Caco-2 (cell line): ENCODE measurements at regions of chr2 and their contacts with region 1.

Region 1: GRCh38 chr2:54233832-54234649 is 22.0 kb downstream of the TSPYL6 start:
- DNase-seq: peak; percentile 51 to 72
- H3K4me3 ChIP-seq: no peak overlapping the region
- H3K4me3 Mint-ChIP-seq: peak overlapping the region; percentile 53
- H3K27ac Mint-ChIP-seq: peak overlapping the region; percentile 80
- H3K4me1 ChIP-seq: peaks cover 31% of the 10 kb centered on the region
- H3K4me1 Mint-ChIP-seq: peaks cover 26% of the 10 kb centered on the region
- H3K27me3 ChIP-seq: no peaks in the 10 kb centered on the region
- H3K27me3 Mint-ChIP-seq: no peaks in the 10 kb centered on the region
- CTCF ChIP-seq: no peak

Region 2: GRCh38 chr2:54084600-54084999 is 149.4 kb before region 1 on chr2:
- CTCF ChIA-PET with region 1: no interaction called
- POLR2A ChIA-PET with region 1: no interaction called
- intact Hi-C with region 1: no loop called
- DNase-seq: no peak
- H3K4me3 ChIP-seq: no peak overlapping the region
- H3K4me3 Mint-ChIP-seq: no peak overlapping the region
- H3K27ac Mint-ChIP-seq: no peak overlapping the region
- H3K4me1 ChIP-seq: peaks cover 18% of the 10 kb centered on the region
- H3K4me1 Mint-ChIP-seq: peaks cover 13% of the 10 kb centered on the region
- H3K27me3 ChIP-seq: 0 out of 2 replicates have a peak, but pooled peaks cover 1% of the 10 kb centered on the region
- H3K27me3 Mint-ChIP-seq: peaks cover 2% of the 10 kb centered on the region
- CTCF ChIP-seq: peak; percentile 33 to 52

Region 3: DNA sequence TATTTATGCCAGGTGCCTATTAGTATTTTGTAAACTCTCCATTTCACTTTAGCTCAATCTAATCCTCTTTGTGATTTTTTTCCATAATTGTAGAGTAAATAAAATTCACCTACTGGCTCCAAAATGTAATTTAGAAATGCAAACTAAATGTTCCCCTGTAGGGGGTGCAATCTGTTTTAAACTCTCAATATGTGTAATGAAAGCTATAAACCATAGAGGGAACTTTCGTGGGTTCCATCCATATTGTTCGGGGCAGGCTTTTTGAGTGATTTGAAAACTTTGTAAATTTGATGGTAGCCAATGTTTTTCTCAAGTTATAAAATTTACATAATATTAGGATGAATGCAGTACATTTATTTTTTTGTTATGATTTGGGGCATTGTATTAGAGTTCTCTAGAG is 27.4 kb before region 1 on chr2:
- CTCF ChIA-PET with region 1: no interaction called
- POLR2A ChIA-PET with region 1: interaction called, 3 read pairs
- intact Hi-C with region 1: loop called (anchors 2 kb)
- DNase-seq: peak in 1 of 2 experiments; percentile 39
- H3K4me3 ChIP-seq: no peak overlapping the region
- H3K4me3 Mint-ChIP-seq: no peak overlapping the region
- H3K27ac Mint-ChIP-seq: no peak overlapping the region
- H3K4me1 ChIP-seq: 0 out of 2 replicates have a peak, but pooled peaks cover 5% of the 10 kb centered on the region
- H3K4me1 Mint-ChIP-seq: peaks cover 27% of the 10 kb centered on the region
- H3K27me3 ChIP-seq: no peaks in the 10 kb centered on the region
- H3K27me3 Mint-ChIP-seq: no peaks in the 10 kb centered on the region
- CTCF ChIP-seq: peak; percentile 43 to 50

Region 4: DNA sequence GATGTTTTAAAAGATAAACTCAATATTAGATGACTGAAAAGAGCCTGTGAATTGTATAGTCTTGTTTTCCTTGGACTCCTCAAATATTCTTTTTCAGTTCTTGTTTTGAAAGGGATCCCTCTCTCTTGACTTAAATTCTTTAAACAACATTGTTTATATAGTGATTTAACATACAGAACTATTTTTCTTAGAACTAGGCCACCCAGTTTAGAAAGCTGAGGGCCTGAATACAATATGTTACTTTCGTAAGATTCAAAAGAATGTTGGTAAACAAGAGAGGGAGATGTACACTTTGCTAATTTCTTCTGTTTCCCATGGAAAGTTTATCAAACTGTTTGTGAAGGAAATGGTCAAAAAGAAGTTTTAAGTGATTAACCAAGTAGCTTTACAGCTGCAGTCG is 27.5 kb after region 1 on chr2:
- CTCF ChIA-PET with region 1: no interaction called
- POLR2A ChIA-PET with region 1: no interaction called
- intact Hi-C with region 1: loop called (anchors 1 kb)
- DNase-seq: no peak
- H3K4me3 ChIP-seq: no peak overlapping the region
- H3K4me3 Mint-ChIP-seq: no peak overlapping the region
- H3K27ac Mint-ChIP-seq: no peak overlapping the region
- H3K4me1 ChIP-seq: peaks cover 16% of the 10 kb centered on the region
- H3K4me1 Mint-ChIP-seq: no peaks in the 10 kb centered on the region
- H3K27me3 ChIP-seq: no peaks in the 10 kb centered on the region
- H3K27me3 Mint-ChIP-seq: no peaks in the 10 kb centered on the region
- CTCF ChIP-seq: no peak

Region 5: GRCh38 chr2:54274781-54275242 is 40.8 kb after region 1 on chr2:
- CTCF ChIA-PET with region 1: interaction called, 3 read pairs
- POLR2A ChIA-PET with region 1: no interaction called
- intact Hi-C with region 1: loop called (anchors 5 kb)
- DNase-seq: no peak
- H3K4me3 ChIP-seq: no peak overlapping the region
- H3K4me3 Mint-ChIP-seq: no peak overlapping the region
- H3K27ac Mint-ChIP-seq: no peak overlapping the region
- H3K4me1 ChIP-seq: no peaks in the 10 kb centered on the region
- H3K4me1 Mint-ChIP-seq: no peaks in the 10 kb centered on the region
- H3K27me3 ChIP-seq: no peaks in the 10 kb centered on the region
- H3K27me3 Mint-ChIP-seq: no peaks in the 10 kb centered on the region
- CTCF ChIP-seq: no peak

Region 6: DNA sequence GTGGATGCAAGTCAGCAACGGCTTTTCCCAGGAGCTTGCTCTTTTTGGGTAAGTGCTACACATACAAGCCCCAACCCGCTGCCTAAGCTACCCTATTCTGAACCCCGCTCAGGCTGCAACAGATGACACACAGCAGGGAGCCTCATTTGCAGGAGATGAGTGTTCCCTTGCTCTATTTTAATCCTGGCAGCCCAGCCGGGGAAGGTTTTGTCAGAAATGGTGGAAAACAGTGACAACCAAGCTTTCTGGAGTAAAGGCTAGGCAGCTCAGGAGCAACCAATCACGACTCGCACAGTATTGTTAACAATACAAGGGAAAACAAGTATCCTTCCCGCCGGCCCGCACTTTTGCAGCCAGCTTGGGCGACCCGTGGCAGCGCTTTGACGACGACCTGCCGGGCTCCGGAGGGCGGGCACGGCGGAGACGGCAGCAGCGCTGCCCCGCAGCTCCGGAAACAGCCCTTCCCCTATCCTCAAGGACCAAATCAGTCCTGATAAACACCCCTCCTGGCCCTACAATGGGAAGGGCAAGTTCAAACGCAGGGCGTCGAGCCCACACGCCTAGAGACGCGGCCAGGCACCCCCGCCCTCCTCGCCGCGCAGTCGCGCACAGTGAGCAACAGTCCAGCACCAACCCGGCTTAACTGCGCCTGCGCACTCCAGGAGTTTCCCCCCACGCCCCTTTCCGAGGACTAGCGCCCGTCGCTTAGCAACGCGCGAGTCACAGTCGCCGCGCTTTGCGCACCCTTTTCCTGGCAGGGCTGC is 96.3 kb after region 1 on chr2:
- CTCF ChIA-PET with region 1: no interaction called
- POLR2A ChIA-PET with region 1: no interaction called
- intact Hi-C with region 1: loop called (anchors 1 kb)
- DNase-seq: peak; percentile 96
- H3K4me3 ChIP-seq: peak overlapping the region; percentile 60
- H3K4me3 Mint-ChIP-seq: peak overlapping the region; percentile 90
- H3K27ac Mint-ChIP-seq: peak overlapping the region; percentile 86
- H3K4me1 ChIP-seq: no peaks in the 10 kb centered on the region
- H3K4me1 Mint-ChIP-seq: peaks cover 13% of the 10 kb centered on the region
- H3K27me3 ChIP-seq: no peaks in the 10 kb centered on the region
- H3K27me3 Mint-ChIP-seq: peaks cover 4% of the 10 kb centered on the region
- CTCF ChIP-seq: no peak

Region 7: DNA sequence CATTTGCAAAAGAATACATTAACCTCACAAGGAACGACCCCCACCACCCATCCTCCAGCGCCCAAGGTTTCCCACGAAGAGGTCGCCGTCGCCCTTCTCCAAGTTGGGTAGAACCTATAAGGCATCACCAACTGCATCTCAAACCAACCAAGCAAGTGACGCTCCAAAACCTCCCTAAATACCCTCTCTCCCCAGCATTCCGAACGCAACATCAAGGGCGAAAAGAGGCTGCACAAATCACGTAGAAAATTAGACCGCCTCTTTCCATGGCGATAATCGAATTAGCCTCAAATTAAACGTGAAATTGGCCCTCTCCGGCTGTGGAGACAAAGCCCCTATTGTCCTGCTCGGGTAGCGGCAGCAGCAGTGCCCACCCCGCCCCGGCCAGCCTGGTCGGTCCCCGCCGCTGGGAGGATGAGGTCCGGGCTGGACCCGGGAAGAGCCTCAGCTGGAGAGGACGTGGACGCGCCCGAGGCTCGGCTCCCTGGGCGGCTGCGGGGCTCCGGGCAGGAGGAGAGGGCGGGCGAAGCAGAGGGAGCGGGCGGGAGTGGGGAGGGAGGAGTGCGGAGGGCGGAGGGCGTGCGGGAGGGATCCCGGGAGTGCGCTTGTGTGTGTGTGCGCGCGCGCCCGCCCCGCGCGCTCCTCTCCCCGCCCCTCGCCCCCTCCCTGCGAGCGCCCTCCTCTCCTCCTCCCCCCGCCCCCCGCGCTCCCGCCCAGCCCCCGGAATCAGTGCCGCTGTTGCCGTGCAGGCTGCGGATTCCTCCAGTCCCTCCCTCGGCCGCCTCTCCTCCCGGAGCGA is 221.7 kb after region 1 on chr2 and contains the start of gene SPTBN1:
- CTCF ChIA-PET with region 1: no interaction called
- POLR2A ChIA-PET with region 1: no interaction called
- intact Hi-C with region 1: loop called (anchors 5 kb)
- DNase-seq: peak; percentile 80 to 82
- H3K4me3 ChIP-seq: peak within 1 kb of the TSS; percentile 77
- H3K4me3 Mint-ChIP-seq: peak within 1 kb of the TSS; percentile 85
- H3K27ac Mint-ChIP-seq: peak within 1 kb of the TSS; percentile 31
- H3K4me1 ChIP-seq: peaks cover 12% of the 10 kb centered on the region; the same call in 1 of the 2 replicates
- H3K4me1 Mint-ChIP-seq: peaks cover 21% of the 10 kb centered on the region
- H3K27me3 ChIP-seq: no peaks in the 10 kb centered on the region
- H3K27me3 Mint-ChIP-seq: no peaks in the 10 kb centered on the region
- CTCF ChIP-seq: no peak
- total RNA-seq, gene SPTBN1: 361 and 383 TPM in 2 replicates